ENCODE measurements at regions of chr5 and their contacts with region 1.

Region 1: DNA sequence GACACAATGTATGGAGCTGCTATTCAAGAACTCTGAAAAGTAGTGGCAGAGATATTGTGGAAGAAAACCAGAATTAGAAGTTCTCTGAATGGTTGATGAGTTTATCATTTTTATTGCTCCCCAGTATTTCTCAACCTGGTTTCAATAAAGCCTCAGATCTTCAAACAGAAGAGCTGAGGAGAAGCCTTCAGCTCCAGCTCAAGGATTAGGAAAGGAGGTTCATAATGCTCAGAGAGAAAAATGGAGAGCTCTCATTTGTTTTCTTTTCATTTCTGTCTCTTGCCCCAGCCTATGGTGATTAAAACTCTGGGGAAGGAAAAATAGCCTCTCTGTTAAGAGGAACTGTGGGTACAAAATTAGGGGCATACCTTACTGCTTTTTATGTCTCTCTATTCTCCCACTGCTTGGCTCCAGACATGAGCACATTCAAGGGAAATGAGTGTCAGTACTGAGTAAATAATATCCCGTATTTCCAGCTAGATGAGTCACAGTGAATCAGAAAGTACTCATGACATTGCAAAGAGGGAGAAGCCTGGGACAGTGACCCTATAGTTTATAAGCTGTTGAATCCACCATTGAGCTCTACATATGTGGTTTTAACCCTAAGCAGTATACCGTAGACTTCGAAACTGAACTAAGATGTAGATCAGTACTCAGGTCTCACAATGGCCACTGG is 138.1 kb downstream of the EMB start:
- DNase-seq: peak; percentile 84
- H3K4me3 Mint-ChIP-seq: no peak overlapping the region
- H3K27ac Mint-ChIP-seq: peak overlapping the region; percentile 81
- H3K4me1 Mint-ChIP-seq: peaks cover 10% of the 10 kb centered on the region
- H3K27me3 Mint-ChIP-seq: no peaks in the 10 kb centered on the region
- CTCF ChIP-seq: no peak

Region 2: DNA sequence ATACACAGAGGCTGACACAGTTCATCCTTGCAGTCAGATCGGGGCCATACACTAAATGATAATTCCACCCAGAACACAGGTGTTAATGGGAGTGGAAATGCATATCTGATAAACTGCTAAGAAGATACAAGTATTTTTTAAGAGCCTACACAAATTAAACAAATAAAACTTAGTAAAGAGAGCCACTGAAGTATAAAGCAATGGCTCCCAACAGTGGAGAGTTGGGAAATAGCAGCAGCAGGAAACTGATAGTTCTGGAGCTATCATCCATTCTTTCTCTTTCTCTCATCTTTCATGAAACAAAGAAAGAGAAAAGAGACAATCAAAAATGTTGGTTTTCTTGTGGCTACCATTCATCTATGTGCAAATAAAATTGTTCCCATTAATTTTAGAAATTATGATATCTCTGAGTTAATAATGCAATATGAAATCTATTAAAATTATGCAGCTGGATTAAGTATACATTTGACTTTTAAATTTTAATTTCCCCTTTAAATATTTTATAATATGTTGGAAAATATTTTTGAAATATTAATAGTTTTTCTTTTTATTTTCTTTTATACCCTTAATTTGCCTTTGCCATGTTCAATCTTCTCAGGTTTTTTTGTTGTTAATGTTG is 17.3 kb after region 1 on chr5:
- CTCF ChIA-PET with region 1: interaction called, 16 read pairs
- POLR2A ChIA-PET with region 1: interaction called, 4 read pairs
- intact Hi-C with region 1: no loop called
- DNase-seq: peak; percentile 34
- H3K4me3 Mint-ChIP-seq: no peak overlapping the region
- H3K27ac Mint-ChIP-seq: no peak overlapping the region
- H3K4me1 Mint-ChIP-seq: no peaks in the 10 kb centered on the region
- H3K27me3 Mint-ChIP-seq: no peaks in the 10 kb centered on the region
- CTCF ChIP-seq: peak; percentile 72